Activated T-helper 2 cell treated with anti-CD3 and anti-CD28 coated beads, Interferon-gamma antibody, Interleukin-2, Interleukin-4, amounts not matched to agents 10 μg/mL and 5 μg/mL and 100 μg/mL, durations not matched to agents 14 hours and 24 hours and 36 hours (primary cell): ENCODE measurements at regions of chr9 and their contacts with region 1.

Region 1: GRCh38 chr9:121322037-121322775 is 47.8 kb downstream of the STOM start:
- DNase-seq: no peak
- H3K4me3 Mint-ChIP-seq: no peak overlapping the region
- H3K27ac Mint-ChIP-seq: no peak overlapping the region
- H3K4me1 Mint-ChIP-seq: peaks cover 17% of the 10 kb centered on the region
- H3K27me3 Mint-ChIP-seq: no peaks in the 10 kb centered on the region

Region 2: DNA sequence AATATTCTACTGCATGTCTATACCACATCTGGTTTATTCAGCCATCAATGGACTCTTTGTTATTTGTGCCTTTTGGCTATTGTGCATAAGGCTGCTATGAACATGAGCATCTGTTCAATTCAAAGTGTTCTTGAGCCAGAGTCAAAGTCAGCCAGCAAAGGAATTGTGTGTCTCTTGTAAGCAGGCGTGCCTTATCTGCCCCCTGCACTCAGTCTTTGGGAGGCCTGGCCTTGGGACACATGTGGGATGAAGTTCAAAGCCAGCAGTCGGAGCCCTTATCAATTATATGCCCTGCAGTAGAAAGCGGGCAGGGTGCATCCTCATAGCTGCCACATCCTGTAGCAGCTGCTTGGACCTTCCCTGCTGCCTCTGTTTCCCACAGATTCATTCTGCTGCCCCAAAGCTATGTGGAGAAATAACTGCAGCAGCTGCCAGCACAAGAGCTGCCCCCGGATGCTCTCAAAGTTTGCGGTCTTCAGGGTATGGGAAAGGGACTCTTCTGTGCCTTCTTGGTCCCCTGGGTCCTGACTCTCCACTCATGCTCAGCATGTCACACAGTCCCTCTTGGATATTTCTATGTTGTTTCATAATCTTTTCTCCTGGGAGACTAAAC is 11.8 kb after region 1 on chr9:
- intact Hi-C with region 1: no loop called
- DNase-seq: no peak
- H3K4me3 Mint-ChIP-seq: no peak overlapping the region
- H3K27ac Mint-ChIP-seq: no peak overlapping the region
- H3K4me1 Mint-ChIP-seq: no peaks in the 10 kb centered on the region
- H3K27me3 Mint-ChIP-seq: no peaks in the 10 kb centered on the region

Region 3: GRCh38 chr9:121376214-121376830 is 54.1 kb after region 1 on chr9:
- intact Hi-C with region 1: loop called (anchors 2 kb)
- DNase-seq: no peak
- H3K4me3 Mint-ChIP-seq: no peak overlapping the region
- H3K27ac Mint-ChIP-seq: no peak overlapping the region
- H3K4me1 Mint-ChIP-seq: peaks cover 13% of the 10 kb centered on the region
- H3K27me3 Mint-ChIP-seq: peaks cover 10% of the 10 kb centered on the region

Region 4: DNA sequence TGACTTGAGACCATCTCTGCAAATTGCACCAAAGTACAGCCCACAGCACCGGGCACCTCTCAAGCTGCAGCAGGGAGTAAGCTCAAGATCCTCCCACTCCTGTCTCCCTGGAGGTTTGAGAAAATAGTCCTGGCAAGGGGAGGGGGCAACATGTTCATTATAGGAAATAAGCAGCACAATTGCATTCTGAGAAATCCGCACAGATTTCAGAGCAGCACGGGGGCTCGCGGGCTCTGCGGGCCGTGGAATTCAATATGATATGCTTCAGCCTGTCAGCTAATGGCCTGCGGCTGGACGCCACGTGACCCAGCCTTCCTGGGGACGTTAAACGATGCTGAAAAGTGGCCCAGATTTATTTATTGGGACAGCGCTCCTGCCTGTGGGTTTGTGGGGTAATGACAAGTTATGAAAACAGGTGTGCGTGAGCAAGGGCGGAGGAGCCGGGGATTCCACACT is 485.6 kb after region 1 on chr9:
- intact Hi-C with region 1: no loop called
- DNase-seq: no peak
- H3K4me3 Mint-ChIP-seq: no peak overlapping the region
- H3K27ac Mint-ChIP-seq: no peak overlapping the region
- H3K4me1 Mint-ChIP-seq: no peaks in the 10 kb centered on the region
- H3K27me3 Mint-ChIP-seq: no peaks in the 10 kb centered on the region